ENCODE measurements at regions of chr4 and their contacts with region 1.

Region 1: DNA sequence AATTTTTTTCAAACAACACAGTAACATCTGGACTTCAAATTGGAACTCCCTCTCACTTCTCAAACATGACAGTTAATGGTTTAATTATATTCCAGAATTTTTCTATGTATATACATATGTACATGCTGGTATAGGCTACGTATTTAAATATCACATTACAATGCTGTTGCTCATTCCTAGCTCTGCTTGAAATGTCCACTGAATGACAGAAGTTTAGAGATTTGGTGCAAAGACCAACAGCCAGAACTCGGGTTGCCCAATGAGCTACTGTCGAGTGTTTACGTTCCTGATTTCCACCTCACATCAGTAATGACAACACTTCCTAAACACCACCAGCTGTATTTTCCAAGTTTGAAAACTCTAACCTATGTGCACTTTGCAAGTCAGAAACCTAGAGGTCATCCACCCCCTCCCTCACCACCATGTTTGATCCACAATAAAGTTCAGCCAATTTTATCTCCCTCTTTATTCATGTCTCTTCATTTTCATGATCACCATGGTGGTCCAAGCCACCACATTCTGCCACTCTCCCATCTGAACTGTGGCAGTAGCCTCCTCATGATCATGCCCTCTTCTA is 49.3 kb upstream of the RPL34 start:
- DNase-seq: no peak
- H3K4me3 Mint-ChIP-seq: no peak overlapping the region
- H3K27ac Mint-ChIP-seq: no peak overlapping the region
- H3K4me1 Mint-ChIP-seq: peaks cover 19% of the 10 kb centered on the region
- H3K27me3 Mint-ChIP-seq: peaks cover 2% of the 10 kb centered on the region

Region 2: DNA sequence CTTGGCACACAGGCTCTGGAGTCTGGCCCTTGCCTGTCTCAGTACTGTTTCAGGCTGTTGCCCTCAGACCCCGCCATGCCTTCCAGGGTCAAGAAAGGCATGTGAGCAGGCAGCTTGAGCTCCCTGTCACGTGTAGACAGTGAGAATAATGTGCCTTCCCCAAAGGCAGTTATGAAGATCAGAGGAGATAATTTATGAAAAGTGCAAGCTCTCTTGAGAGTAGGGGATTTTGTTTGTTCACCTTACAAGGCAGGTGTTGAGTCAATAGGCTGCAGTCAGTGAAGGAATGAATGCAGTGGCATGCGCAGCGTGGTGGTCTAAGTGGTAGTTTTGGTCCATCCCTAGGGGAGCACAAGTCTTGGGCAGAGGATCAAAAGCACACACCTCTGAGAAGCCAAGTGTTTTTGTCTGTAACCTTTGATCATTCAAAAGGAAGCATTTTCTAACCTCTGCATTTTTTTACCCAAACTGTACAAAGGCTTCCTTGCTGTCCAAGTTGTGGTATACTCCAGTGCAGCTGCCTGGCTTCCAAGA is 567.0 kb before region 1 on chr4:
- CTCF ChIA-PET with region 1: no interaction called
- POLR2A ChIA-PET with region 1: no interaction called
- DNase-seq: no peak
- H3K4me3 Mint-ChIP-seq: no peak overlapping the region
- H3K27ac Mint-ChIP-seq: peak overlapping the region; percentile 43
- H3K4me1 Mint-ChIP-seq: peaks cover 36% of the 10 kb centered on the region
- H3K27me3 Mint-ChIP-seq: no peaks in the 10 kb centered on the region

Region 3: DNA sequence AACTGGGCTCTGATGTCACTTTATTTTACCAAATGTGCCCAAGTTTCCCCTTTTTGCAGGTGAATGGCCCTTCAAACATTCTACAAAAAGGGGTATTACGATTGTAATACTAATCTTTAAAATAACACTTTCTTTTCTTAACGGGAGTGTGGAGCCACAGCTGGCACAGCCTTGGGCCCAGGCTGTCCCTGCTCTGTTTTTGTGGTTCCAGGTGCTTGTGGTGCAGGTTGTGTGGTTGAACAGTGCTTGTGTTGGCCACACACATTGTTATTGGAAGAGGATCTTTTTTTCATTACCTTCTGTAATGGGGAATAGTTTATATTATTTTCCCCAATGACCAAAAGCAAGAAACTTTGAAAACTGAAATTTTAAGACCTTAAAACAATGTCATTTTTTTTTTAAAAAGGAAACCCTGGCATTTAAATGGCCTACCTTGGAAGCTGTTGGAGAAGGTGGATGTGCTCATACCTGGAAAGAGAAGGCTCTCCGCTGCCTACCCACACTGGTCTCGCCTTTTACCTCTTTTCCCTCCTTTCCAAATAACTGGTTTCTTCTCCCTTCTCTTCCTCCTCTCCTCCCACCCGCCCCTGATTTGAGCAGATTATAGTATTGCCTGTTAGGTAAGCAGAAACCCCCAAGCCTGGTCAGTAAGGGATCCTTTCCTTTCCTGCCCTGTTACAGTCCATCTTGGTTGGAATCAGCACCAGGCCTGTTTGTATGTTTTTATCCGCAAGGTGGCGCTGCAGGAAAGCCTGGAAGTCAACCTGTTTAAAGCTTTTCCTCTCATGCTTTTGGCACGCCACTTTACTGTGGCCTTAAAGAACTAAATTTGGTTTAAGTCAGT is 552.8 kb before region 1 on chr4:
- CTCF ChIA-PET with region 1: interaction called, 10 read pairs
- POLR2A ChIA-PET with region 1: no interaction called
- DNase-seq: peak; percentile 90
- H3K4me3 Mint-ChIP-seq: no peak overlapping the region
- H3K27ac Mint-ChIP-seq: peak overlapping the region; percentile 21
- H3K4me1 Mint-ChIP-seq: peaks cover 34% of the 10 kb centered on the region
- H3K27me3 Mint-ChIP-seq: no peaks in the 10 kb centered on the region

Region 4: GRCh38 chr4:108030332-108030731 is 540.7 kb before region 1 on chr4:
- CTCF ChIA-PET with region 1: interaction called, 17 read pairs
- POLR2A ChIA-PET with region 1: no interaction called
- DNase-seq: peak; percentile 82
- H3K4me3 Mint-ChIP-seq: no peak overlapping the region
- H3K27ac Mint-ChIP-seq: peak overlapping the region; percentile 82
- H3K4me1 Mint-ChIP-seq: peaks cover 73% of the 10 kb centered on the region
- H3K27me3 Mint-ChIP-seq: no peaks in the 10 kb centered on the region

Region 5: DNA sequence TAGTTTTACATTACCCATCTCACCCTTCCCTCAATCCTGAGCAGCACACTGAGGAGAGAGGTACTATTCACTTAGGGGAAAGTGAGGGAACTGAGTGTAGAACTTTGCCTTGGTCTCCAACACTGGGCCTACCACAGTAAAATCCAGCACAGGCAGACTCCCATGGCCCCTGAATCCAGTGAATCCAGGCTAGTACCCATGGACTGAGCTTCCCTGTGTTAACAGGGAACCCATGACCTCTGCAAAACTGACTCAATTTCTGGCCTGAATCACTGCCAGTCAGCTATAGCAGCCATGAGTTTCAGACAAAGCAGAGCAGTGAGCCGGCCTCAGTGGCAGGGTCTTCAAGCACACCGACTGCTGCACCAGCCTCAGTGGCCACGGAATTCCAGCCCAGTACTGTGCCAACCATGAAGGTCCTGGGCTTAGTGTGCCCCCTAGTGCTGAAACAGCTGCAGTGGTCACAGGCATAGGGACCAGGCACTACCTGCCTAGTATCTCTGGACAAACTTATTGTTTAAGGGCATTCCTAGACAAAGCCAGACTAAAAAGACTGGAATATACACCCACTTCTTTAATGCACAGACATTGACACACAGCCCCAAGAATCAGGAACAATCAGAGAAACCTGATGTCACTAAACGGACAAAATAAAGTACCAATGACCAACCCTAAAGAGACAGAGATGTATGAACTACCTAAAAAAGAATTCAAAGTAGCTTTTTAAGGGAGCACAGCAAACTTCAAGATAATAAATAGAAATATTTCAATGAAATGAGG is 78.1 kb before region 1 on chr4:
- CTCF ChIA-PET with region 1: no interaction called
- POLR2A ChIA-PET with region 1: interaction called, 14 read pairs
- DNase-seq: peak; percentile 27
- H3K4me3 Mint-ChIP-seq: no peak overlapping the region
- H3K27ac Mint-ChIP-seq: no peak overlapping the region
- H3K4me1 Mint-ChIP-seq: peaks cover 12% of the 10 kb centered on the region
- H3K27me3 Mint-ChIP-seq: peaks cover 5% of the 10 kb centered on the region